WTC11 (cell line): ENCODE measurements at regions of chr16 and their contacts with region 1.

Region 1: DNA sequence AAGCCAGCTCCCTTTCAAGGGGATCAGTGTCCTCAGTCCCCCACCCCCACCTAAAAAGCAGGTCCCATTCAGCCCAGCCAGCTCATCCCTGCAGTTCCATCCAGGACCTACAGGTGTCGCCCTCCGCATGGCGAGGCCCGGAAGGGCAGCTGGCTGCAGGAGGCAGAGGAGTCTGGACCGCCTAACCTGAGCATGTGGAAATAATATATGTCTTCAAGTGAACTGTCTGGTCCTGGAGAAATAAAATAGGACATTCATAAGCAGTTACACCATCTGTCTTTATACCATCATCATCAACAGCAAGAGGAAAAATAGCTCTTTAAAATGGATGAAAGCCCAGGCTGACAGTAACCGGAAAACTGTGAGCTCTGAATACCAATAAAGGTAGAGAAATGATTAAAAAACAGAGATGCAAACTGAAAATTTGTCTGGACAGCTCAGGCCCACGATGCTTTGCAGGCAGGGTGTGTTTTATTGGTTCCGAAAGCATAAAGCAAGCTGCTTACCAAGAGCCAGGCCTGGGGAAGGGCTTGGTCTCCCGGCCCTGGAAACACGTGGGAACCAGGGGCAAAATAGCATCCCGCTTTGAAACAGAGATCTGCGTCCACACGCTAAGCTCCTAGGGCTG is 215.2 kb downstream of the ZFHX3 start:
- DNase-seq: peak; percentile 93
- ATAC-seq: peak; percentile 87
- H3K4me3 Mint-ChIP-seq: no peak overlapping the region
- H3K27ac Mint-ChIP-seq: no peak overlapping the region
- H3K4me1 Mint-ChIP-seq: peaks cover 11% of the 10 kb centered on the region
- H3K27me3 Mint-ChIP-seq: no peaks in the 10 kb centered on the region
- CTCF ChIP-seq: peak; percentile 93

Region 2: GRCh38 chr16:72501739-72502593 is 330.8 kb before region 1 on chr16:
- CTCF ChIA-PET with region 1: interaction called, 17 read pairs
- POLR2A ChIA-PET with region 1: no interaction called
- DNase-seq: peak; percentile 67
- ATAC-seq: peak; percentile 87
- H3K4me3 Mint-ChIP-seq: no peak overlapping the region
- H3K27ac Mint-ChIP-seq: no peak overlapping the region
- H3K4me1 Mint-ChIP-seq: peaks cover 4% of the 10 kb centered on the region
- H3K27me3 Mint-ChIP-seq: no peaks in the 10 kb centered on the region
- CTCF ChIP-seq: peak; percentile 47

Region 3: GRCh38 chr16:72736074-72736473 is 96.7 kb before region 1 on chr16:
- CTCF ChIA-PET with region 1: no interaction called
- POLR2A ChIA-PET with region 1: no interaction called
- DNase-seq: no peak
- ATAC-seq: no peak
- H3K4me3 Mint-ChIP-seq: no peak overlapping the region
- H3K27ac Mint-ChIP-seq: no peak overlapping the region
- H3K4me1 Mint-ChIP-seq: peaks cover 3% of the 10 kb centered on the region; the same call in 1 of the 2 replicates
- H3K27me3 Mint-ChIP-seq: no peaks in the 10 kb centered on the region
- CTCF ChIP-seq: no peak

Region 4: DNA sequence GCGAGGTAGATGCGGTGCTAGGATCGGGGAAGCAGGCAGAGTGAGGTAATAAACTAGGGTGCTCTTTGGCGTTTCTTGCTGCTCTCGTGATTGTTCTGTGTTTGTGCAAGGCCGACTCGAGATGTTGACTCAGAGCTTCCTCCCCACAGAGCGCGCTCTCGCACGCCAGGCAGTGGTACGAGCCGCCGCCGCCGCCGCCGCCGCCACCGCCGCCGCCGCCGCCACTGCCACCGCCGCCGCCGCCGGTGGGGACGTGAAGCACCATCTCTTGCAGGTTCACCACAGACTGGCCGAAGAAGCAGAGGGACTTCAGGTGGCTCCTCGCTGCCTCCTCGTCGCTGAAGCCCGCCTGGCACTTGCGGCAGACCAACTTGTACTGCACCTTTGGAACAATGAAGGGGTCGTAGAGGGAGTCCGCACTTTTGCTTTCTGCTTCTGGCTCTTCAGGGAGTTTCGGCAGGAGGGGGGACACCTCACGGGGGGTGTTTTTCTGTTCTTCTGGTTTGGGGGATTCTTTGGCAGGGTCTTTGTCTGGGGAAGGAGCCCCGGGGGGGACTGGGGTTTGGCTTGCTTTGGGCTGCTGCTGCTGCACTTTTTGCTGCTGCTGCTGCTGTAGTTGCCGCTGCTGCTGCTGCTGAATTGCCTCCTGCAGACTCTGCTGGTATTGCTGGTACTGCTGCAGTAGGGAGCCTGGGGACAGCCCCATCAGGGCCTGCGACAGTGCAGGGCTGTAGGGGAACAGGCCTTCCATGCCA is 45.0 kb before region 1 on chr16:
- CTCF ChIA-PET with region 1: interaction called, 19 read pairs
- POLR2A ChIA-PET with region 1: interaction called, 4 read pairs
- DNase-seq: peak; percentile 56
- ATAC-seq: peak; percentile 69
- H3K4me3 Mint-ChIP-seq: peak overlapping the region; percentile 76
- H3K27ac Mint-ChIP-seq: no peak overlapping the region
- H3K4me1 Mint-ChIP-seq: peaks cover 32% of the 10 kb centered on the region
- H3K27me3 Mint-ChIP-seq: peaks cover 12% of the 10 kb centered on the region
- CTCF ChIP-seq: no peak

Region 5: GRCh38 chr16:72818236-72818845 is 14.4 kb before region 1 on chr16:
- CTCF ChIA-PET with region 1: interaction called, 75 read pairs
- POLR2A ChIA-PET with region 1: no interaction called
- DNase-seq: peak; percentile 47
- ATAC-seq: no peak
- H3K4me3 Mint-ChIP-seq: no peak overlapping the region
- H3K27ac Mint-ChIP-seq: no peak overlapping the region
- H3K4me1 Mint-ChIP-seq: no peaks in the 10 kb centered on the region
- H3K27me3 Mint-ChIP-seq: no peaks in the 10 kb centered on the region
- CTCF ChIP-seq: peak; percentile 20; the same call in 1 of the 2 replicates

Region 6: GRCh38 chr16:72961121-72961763 is 128.5 kb after region 1 on chr16:
- CTCF ChIA-PET with region 1: interaction called, 13 read pairs
- POLR2A ChIA-PET with region 1: no interaction called
- DNase-seq: no peak
- ATAC-seq: no peak
- H3K4me3 Mint-ChIP-seq: no peak overlapping the region
- H3K27ac Mint-ChIP-seq: no peak overlapping the region
- H3K4me1 Mint-ChIP-seq: peaks cover 19% of the 10 kb centered on the region
- H3K27me3 Mint-ChIP-seq: no peaks in the 10 kb centered on the region
- CTCF ChIP-seq: no peak

Region 7: DNA sequence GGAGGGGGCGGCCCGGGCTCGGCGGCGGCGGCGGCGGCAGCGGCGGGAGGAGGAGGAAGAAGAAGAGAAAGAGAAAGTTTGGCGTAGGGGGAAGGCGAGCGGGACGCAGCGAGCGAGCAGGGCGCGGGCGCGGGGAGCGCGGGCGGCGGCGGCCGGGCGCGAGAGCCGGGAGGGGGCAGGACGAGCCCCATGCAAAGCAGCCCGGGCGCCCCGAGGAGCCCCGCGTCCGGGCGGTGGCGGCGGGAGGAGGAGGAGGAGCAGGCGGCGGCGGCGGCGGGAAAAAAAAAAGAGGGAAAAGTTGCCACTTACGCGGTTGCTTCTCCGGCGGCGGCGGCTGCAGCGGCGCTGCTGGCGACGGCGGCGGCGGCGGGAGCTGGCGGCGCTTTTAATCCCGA is 225.5 kb after region 1 on chr16:
- CTCF ChIA-PET with region 1: interaction called, 20 read pairs
- POLR2A ChIA-PET with region 1: no interaction called
- DNase-seq: no peak
- ATAC-seq: no peak
- H3K4me3 Mint-ChIP-seq: peak overlapping the region; percentile 33; the same call in 1 of the 2 replicates
- H3K27ac Mint-ChIP-seq: no peak overlapping the region
- H3K4me1 Mint-ChIP-seq: peaks cover 39% of the 10 kb centered on the region
- H3K27me3 Mint-ChIP-seq: peaks cover 44% of the 10 kb centered on the region
- CTCF ChIP-seq: no peak

Region 8: GRCh38 chr16:73196670-73197069 is 363.9 kb after region 1 on chr16:
- CTCF ChIA-PET with region 1: interaction called, 14 read pairs
- POLR2A ChIA-PET with region 1: no interaction called
- DNase-seq: peak; percentile 73
- ATAC-seq: peak; percentile 99
- H3K4me3 Mint-ChIP-seq: no peak overlapping the region
- H3K27ac Mint-ChIP-seq: no peak overlapping the region
- H3K4me1 Mint-ChIP-seq: peaks cover 5% of the 10 kb centered on the region
- H3K27me3 Mint-ChIP-seq: peaks cover 14% of the 10 kb centered on the region
- CTCF ChIP-seq: peak; percentile 45